CD8-positive, alpha-beta T cell (primary cell): ENCODE measurements at regions of chr19 and their contacts with region 1.

Region 1: DNA sequence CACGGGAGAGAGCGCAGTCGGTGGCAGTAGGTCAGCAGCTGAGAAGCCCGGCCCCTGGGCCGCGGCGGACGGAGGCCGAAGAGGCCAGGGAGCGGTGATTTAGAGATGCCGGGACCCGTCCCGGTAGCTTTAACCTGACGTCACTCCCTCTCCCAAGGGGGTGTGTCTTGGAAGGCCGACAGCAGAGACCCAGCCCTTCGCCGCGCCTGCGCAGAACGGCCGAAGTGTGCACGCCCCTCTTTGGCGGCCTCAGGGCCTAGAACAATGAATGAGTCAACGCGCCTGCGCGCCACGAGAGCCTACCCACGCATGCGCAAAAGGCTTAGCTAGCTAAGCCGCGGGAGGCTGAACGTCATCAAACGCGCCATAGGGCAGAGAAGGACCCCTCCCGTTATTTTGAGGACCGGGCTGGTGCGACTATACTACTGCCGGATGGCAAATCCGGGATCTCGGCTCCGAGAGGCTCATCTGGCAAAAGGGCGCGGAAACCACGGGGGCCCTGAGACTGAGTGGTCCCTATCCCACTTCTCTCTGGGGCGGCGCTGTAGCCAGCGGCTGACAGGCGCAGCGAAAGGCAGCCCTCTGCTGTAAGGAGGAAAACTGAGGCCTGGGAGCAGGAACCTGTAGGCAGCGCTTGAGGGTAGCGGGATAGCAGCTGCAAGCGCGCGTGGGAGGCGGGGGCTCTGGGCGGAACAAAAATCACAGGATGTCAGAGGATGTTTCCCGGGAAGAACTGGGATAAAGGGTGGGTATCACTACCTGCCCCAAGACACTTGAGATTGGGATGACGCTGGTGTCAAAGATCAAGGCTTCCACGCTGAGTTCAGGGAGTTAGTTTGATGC is at the starts of genes IRGQ and ZNF576:
- DNase-seq: peak; percentile 99 to 100 (median 100)
- ATAC-seq: peak; percentile 75
- H3K4me3 ChIP-seq: peak within 1 kb of the TSS; percentile 91 to 100
- H3K4me3 Mint-ChIP-seq: peak within 1 kb of the TSS; percentile 94
- H3K27ac ChIP-seq: peak within 1 kb of the TSS; percentile 96 to 100
- H3K27ac Mint-ChIP-seq: peak within 1 kb of the TSS; percentile 100
- H3K4me1 ChIP-seq: peaks cover 33% of the 10 kb centered on the region
- H3K4me1 Mint-ChIP-seq: peaks cover 30% of the 10 kb centered on the region
- H3K27me3 ChIP-seq: no peaks in the 10 kb centered on the region
- H3K27me3 Mint-ChIP-seq: no peaks in the 10 kb centered on the region
- CTCF ChIP-seq: no peak
- total RNA-seq, gene IRGQ: 25.5 to 26.5 TPM
- total RNA-seq, gene ZNF576: 4.9 to 5.2 TPM

Region 2: DNA sequence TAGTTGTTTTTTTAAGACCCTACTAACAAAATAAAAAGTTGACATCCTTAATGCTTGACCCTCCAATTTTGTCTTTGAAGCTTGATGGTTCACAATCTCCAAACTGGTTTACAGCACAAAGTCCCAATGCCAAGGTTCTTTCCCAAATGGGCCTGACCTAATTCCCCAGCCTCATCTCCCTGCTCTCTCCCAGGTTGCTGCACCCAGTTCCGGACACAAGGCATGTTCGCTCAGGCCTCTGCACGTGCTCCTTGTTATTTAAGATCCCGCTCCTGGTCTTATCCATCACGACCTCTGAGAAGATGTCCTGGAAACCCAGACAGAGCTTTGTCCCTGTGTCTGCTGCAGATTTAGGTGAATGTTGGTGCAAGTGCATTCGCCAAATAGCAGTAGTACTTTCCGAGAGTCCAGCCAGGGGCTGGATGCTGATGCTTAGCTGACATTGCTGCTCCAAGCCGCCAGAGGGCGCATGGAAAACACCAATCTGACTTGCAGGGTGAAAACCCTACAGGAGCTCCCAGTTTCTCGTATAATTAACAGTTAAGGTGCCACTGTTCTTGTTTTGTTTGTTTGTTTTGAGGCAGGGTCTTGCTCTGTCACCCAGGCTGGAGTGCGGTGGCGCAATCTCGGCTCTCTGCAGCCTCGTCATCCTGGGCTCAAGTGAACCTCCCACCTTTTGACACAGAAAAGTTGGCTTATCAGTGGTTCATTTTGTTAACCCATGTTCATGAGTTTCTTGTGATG is 149.3 kb before region 1 on chr19:
- CTCF ChIA-PET with region 1: interaction called, 39 read pairs
- POLR2A ChIA-PET with region 1: interaction called, 5 read pairs
- intact Hi-C with region 1: loop called (anchors 1 to 2 kb)
- DNase-seq: peak; percentile 58 to 91 (median 82)
- ATAC-seq: peak; percentile 89
- H3K4me3 ChIP-seq: no peak overlapping the region
- H3K4me3 Mint-ChIP-seq: no peak overlapping the region
- H3K27ac ChIP-seq: no peak overlapping the region
- H3K27ac Mint-ChIP-seq: peak overlapping the region; percentile 87
- H3K4me1 ChIP-seq: peaks cover 5% of the 10 kb centered on the region
- H3K4me1 Mint-ChIP-seq: peaks cover 23% of the 10 kb centered on the region
- H3K27me3 ChIP-seq: no peaks in the 10 kb centered on the region
- H3K27me3 Mint-ChIP-seq: no peaks in the 10 kb centered on the region
- CTCF ChIP-seq: peak; percentile 97

Region 3: GRCh38 chr19:43526884-43527859 is 69.0 kb before region 1 on chr19 and contains the start of gene ETHE1:
- CTCF ChIA-PET with region 1: interaction called, 46 read pairs
- POLR2A ChIA-PET with region 1: interaction called, 7 read pairs
- intact Hi-C with region 1: no loop called
- DNase-seq: peak in 8 of 9 experiments; percentile 57 to 81 (median 72)
- ATAC-seq: peak; percentile 76
- H3K4me3 ChIP-seq: peak within 1 kb of the TSS; percentile 88 to 93
- H3K4me3 Mint-ChIP-seq: peak within 1 kb of the TSS; percentile 94
- H3K27ac ChIP-seq: peak within 1 kb of the TSS; percentile 55 to 65
- H3K27ac Mint-ChIP-seq: peak within 1 kb of the TSS; percentile 73
- H3K4me1 ChIP-seq: peaks cover 16% of the 10 kb centered on the region
- H3K4me1 Mint-ChIP-seq: peaks cover 26% of the 10 kb centered on the region
- H3K27me3 ChIP-seq: no peaks in the 10 kb centered on the region
- H3K27me3 Mint-ChIP-seq: no peaks in the 10 kb centered on the region
- CTCF ChIP-seq: no peak
- total RNA-seq, gene ETHE1: 17.2 to 17.6 TPM

Region 4: GRCh38 chr19:43562698-43563241 is 33.5 kb before region 1 on chr19:
- CTCF ChIA-PET with region 1: interaction called, 190 read pairs
- POLR2A ChIA-PET with region 1: interaction called, 6 read pairs
- intact Hi-C with region 1: loop called in 1 of 2 experiments (anchors 1 kb)
- DNase-seq: peak; percentile 67 to 96 (median 82)
- ATAC-seq: peak; percentile 87
- H3K4me3 ChIP-seq: peak overlapping the region; percentile 10 to 30
- H3K4me3 Mint-ChIP-seq: peak overlapping the region; percentile 66
- H3K27ac ChIP-seq: peak overlapping the region; percentile 78 to 97
- H3K27ac Mint-ChIP-seq: peak overlapping the region; percentile 90
- H3K4me1 ChIP-seq: peaks cover 49% of the 10 kb centered on the region
- H3K4me1 Mint-ChIP-seq: peaks cover 54% of the 10 kb centered on the region
- H3K27me3 ChIP-seq: no peaks in the 10 kb centered on the region
- H3K27me3 Mint-ChIP-seq: no peaks in the 10 kb centered on the region
- CTCF ChIP-seq: no peak

Region 5: GRCh38 chr19:43619262-43620060 is 23.2 kb after region 1 on chr19 and contains the start of gene ZNF428:
- CTCF ChIA-PET with region 1: no interaction called
- POLR2A ChIA-PET with region 1: interaction called, 5 read pairs
- intact Hi-C with region 1: loop called (anchors 1 kb)
- DNase-seq: peak; percentile 61 to 95 (median 86)
- ATAC-seq: peak; percentile 88
- H3K4me3 ChIP-seq: peak within 1 kb of the TSS; percentile 97 to 98
- H3K4me3 Mint-ChIP-seq: peak within 1 kb of the TSS; percentile 96
- H3K27ac ChIP-seq: peak within 1 kb of the TSS; percentile 78 to 90
- H3K27ac Mint-ChIP-seq: peak within 1 kb of the TSS; percentile 97
- H3K4me1 ChIP-seq: peaks cover 25% of the 10 kb centered on the region
- H3K4me1 Mint-ChIP-seq: peaks cover 32% of the 10 kb centered on the region
- H3K27me3 ChIP-seq: no peaks in the 10 kb centered on the region
- H3K27me3 Mint-ChIP-seq: no peaks in the 10 kb centered on the region
- CTCF ChIP-seq: no peak
- total RNA-seq, gene ZNF428: 31.8 to 33.3 TPM

Region 6: DNA sequence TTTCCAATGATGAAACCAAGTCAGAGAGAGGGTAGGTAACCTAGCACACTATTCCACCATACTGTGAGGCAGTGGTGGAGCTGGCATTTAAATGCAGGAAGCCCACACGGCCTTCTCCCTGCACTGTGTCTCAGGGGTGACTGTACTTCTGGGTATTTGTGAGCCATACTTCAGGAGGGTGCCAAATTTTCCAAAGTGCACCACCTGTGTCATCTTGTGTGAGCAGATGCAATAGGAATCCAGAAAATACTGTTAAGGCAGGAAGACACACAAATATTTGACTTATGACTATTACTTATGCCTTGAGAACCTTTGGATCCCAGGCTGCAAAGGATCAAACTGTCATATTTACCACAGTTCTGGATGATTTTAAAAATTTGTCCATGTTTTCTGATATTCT is 834.7 kb after region 1 on chr19:
- CTCF ChIA-PET with region 1: no interaction called
- POLR2A ChIA-PET with region 1: no interaction called
- intact Hi-C with region 1: no loop called
- DNase-seq: no peak
- ATAC-seq: no peak
- H3K4me3 ChIP-seq: no peak overlapping the region
- H3K4me3 Mint-ChIP-seq: no peak overlapping the region
- H3K27ac ChIP-seq: no peak overlapping the region
- H3K27ac Mint-ChIP-seq: no peak overlapping the region
- H3K4me1 ChIP-seq: no peaks in the 10 kb centered on the region
- H3K4me1 Mint-ChIP-seq: no peaks in the 10 kb centered on the region
- H3K27me3 ChIP-seq: no peaks in the 10 kb centered on the region
- H3K27me3 Mint-ChIP-seq: no peaks in the 10 kb centered on the region
- CTCF ChIP-seq: no peak

Region 7: DNA sequence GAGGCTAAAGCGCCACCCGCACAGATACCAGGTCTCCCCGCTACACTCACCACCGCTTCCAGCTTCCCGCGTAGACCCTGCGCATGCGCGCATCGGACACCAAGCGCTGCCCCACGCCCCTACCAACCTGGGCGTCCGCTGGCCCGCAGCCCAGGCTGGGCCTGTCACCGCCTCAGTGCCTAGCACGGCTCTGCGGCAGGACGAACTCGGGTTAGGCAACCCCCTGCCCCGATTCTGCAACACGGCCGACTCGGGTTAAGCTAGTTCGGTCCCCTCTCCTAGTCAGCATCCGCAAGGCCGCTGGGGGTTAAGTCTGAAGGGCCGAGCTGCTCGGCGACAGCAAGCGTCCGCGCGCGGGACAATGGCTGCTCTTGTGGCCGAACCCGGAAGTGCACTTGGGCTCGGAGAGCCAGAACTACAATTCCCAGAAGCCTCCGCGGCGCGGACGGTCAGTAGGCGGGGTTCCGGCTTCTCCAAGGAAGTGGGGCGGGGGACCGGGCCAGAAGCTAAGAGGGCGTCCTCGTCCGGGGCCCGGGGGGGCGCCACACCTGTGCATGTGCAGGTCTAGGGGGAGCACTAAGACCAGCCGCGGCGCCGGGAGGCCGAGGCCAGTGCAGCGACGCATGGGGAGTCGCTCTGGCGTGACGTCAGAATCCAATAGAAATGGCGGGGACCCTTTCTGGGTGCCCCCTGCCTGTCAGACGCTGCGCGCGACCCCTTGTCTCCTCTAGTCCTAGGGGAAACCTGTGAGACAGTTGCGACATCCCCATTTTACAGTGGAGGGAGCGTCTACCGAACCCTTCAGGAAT is 904.1 kb after region 1 on chr19 and contains the start of gene ZNF180:
- CTCF ChIA-PET with region 1: no interaction called
- POLR2A ChIA-PET with region 1: no interaction called
- intact Hi-C with region 1: loop called in 1 of 2 experiments (anchors 2 kb)
- DNase-seq: peak; percentile 89 to 98 (median 96)
- ATAC-seq: peak; percentile 96
- H3K4me3 ChIP-seq: peak within 1 kb of the TSS; percentile 86 to 90
- H3K4me3 Mint-ChIP-seq: peak within 1 kb of the TSS; percentile 92
- H3K27ac ChIP-seq: peak within 1 kb of the TSS; percentile 60 to 77
- H3K27ac Mint-ChIP-seq: peak within 1 kb of the TSS; percentile 92
- H3K4me1 ChIP-seq: peaks cover 21% of the 10 kb centered on the region
- H3K4me1 Mint-ChIP-seq: peaks cover 34% of the 10 kb centered on the region
- H3K27me3 ChIP-seq: no peaks in the 10 kb centered on the region
- H3K27me3 Mint-ChIP-seq: peaks cover 10% of the 10 kb centered on the region
- CTCF ChIP-seq: peak; percentile 35
- total RNA-seq, gene ZNF180: 8.5 to 8.8 TPM